ENCODE measurements at regions of chr2 and their contacts with region 1.

Region 1: GRCh38 chr2:207974216-207974605 is 51.1 kb downstream of the PLEKHM3 start:
- DNase-seq: no peak
- ATAC-seq: peak; percentile 57 to 76 (median 67)
- H3K4me3 ChIP-seq: peak overlapping the region in 1 of 3 donors; percentile 20
- H3K27ac ChIP-seq: peak overlapping the region in 1 of 3 donors; percentile 76
- H3K4me1 ChIP-seq: peaks cover 0 to 17% (median 3%) of the 10 kb centered on the region in 4 donors
- H3K27me3 ChIP-seq: no peaks in the 10 kb centered on the region
- CTCF ChIP-seq: no peak
- POLR2A ChIP-seq: no peak

Region 2: GRCh38 chr2:207769597-207770486 is 204.4 kb before region 1 on chr2 and contains the start of gene FZD5:
- intact Hi-C with region 1: loop called in 1 of 2 experiments (anchors 10 kb)
- DNase-seq: peak; percentile 99 to 100 (median 99)
- ATAC-seq: peak; percentile 75 to 91 (median 80)
- H3K4me3 ChIP-seq: peak within 1 kb of the TSS; percentile 79 to 85 (median 83)
- H3K27ac ChIP-seq: peak within 1 kb of the TSS; percentile 93 to 100 (median 98)
- H3K4me1 ChIP-seq: peaks cover 0 to 17% (median 8%) of the 10 kb centered on the region in 4 donors
- H3K27me3 ChIP-seq: no peaks in the 10 kb centered on the region
- CTCF ChIP-seq: peak; percentile 58 to 83 (median 67)
- POLR2A ChIP-seq: peak; percentile 97
- total RNA-seq, gene FZD5: 18.5 to 37.4 (median 29.3) TPM

Region 3: DNA sequence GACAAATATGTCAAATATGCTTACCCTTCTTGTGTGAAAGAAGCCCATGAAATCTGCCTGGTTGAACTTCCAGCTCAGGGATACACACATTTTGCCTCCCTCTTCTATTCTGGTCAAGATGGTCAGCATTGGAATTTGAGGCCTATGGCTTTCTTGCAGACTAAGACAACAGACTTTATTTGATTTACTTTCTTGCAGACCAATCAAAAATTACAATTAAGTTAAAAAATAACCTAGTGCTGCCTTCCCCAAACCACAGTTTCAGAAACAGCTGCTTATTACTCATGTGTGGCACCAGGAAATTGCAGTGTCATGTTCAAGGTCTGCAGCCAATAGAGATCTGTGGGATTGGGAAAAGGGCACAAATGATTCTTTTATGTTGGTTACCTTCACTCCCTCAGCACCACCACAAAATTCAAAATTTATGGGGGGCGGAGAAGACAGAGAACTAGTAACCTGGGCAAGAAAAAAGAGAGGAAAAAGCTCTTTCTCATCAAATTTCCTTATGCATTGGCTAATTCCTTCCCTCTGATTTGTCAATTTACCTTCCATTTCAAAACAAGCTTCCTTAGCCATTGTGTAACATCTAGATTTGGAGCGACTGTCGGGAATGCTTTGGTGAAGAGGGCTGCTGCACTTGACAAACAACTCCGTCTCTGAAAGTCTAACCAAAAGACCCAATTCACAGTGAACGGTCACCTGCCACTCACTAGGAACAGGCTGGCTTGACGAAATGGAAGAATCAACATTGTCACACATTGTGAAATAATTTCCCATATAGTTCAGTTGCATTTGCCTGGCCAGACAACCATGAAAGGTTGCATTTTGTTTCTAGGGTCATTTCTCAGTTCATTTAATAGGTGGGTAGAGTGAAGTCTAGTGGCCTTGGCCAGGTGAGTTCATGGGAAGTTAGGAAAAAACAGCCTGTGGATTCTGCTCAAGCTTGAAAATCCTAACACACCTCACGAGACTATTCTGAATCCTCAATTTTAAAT is 104.1 kb before region 1 on chr2:
- intact Hi-C with region 1: no loop called
- DNase-seq: peak in 1 of 3 donors; percentile 55
- ATAC-seq: peak; percentile 77 to 91 (median 84)
- H3K4me3 ChIP-seq: peak overlapping the region in 1 of 3 donors; percentile 25
- H3K27ac ChIP-seq: peak overlapping the region; percentile 76 to 92 (median 77)
- H3K4me1 ChIP-seq: peaks cover 0 to 46% (median 9%) of the 10 kb centered on the region in 4 donors
- H3K27me3 ChIP-seq: no peaks in the 10 kb centered on the region
- CTCF ChIP-seq: no peak
- POLR2A ChIP-seq: peak; percentile 27

Measured in right lobe of liver (tissue), 6 donors.